Cardiac septum (tissue), 1 donor: ENCODE measurements at regions of chr1 and their contacts with region 1.

Region 1: DNA sequence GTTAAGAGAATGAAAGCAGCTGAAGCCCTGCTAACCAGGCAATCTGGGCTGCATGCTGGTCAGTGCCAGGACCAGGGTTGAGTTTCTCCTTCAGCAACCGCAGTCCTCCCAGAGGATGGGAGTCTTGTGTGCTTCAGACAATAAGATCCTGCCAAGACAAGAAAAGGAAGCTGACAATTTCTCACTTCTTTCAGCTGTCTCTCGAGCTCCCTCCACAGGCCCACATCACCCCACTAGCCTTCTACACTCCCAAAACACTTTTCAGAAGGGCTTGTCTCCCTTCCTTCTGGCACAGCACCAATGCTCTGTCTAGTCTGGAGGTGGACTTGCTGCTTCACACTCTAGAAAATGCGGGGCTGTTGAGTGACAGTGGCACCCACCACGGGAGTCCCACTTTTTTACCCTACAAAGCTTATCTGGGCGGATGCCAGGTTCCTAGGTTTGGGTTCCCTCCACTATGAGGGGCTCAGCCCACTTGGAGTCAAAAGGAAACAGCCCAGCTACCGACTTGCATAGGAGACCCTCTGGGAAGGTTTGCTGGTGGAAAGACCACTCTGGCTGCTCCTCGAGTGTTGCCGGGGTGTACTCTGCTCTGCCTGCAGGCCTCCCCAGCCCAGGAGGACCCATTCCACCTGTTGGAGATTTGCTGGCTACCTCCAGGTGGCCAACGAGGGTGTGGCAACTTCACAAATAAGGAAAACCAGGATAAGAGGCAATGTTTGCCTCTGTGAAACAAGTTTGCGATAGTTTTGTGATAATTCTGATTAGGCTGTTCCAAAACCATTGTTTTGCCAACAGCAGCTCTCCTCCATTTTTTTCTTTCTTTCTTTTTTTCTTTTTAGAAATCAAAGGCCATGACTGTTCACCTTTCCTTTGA is 68.9 kb downstream of the TENT5C start:
- DNase-seq: no peak

Region 2: GRCh38 chr1:117534995-117535467 is 139.7 kb before region 1 on chr1:
- intact Hi-C with region 1: loop called (anchors 5 kb)
- DNase-seq: no peak

Region 3: GRCh38 chr1:117605774-117606648 is 68.7 kb before region 1 on chr1 and contains the start of gene TENT5C:
- intact Hi-C with region 1: loop called (anchors 5 kb)
- DNase-seq: peak; percentile 98
- total RNA-seq, gene TENT5C: 7.4 TPM